Transverse colon (tissue), 4 donors: ENCODE measurements at regions of chr15 and their contacts with region 1.

Region 1: GRCh38 chr15:91271565-91272153 is 171.6 kb downstream of the SV2B start:
- DNase-seq: peak; percentile 57
- H3K4me3 ChIP-seq: no peak overlapping the region
- H3K27ac ChIP-seq: no peak overlapping the region
- H3K4me1 ChIP-seq: peaks cover 0 to 7% (median 0%) of the 10 kb centered on the region in 4 donors
- H3K27me3 ChIP-seq: peaks cover 14% of the 10 kb centered on the region
- CTCF ChIP-seq: peak; percentile 68 to 78 (median 73)
- EP300 ChIP-seq: no peak
- POLR2A ChIP-seq: no peak

Region 2: GRCh38 chr15:90954712-90955671 is 316.7 kb before region 1 on chr15 and contains the start of gene RCCD1:
- in situ Hi-C with region 1: loop called in 3 of 4 experiments (anchors 10 to 25 kb)
- intact Hi-C with region 1: loop called (anchors 10 kb)
- DNase-seq: peak; percentile 96
- H3K4me3 ChIP-seq: peak within 1 kb of the TSS; percentile 49 to 73 (median 62)
- H3K27ac ChIP-seq: peak within 1 kb of the TSS; percentile 93 to 98 (median 94)
- H3K4me1 ChIP-seq: peaks cover 11 to 32% (median 20%) of the 10 kb centered on the region in 4 donors
- H3K27me3 ChIP-seq: no peaks in the 10 kb centered on the region
- CTCF ChIP-seq: no peak
- EP300 ChIP-seq: no peak
- POLR2A ChIP-seq: peak; percentile 75
- total RNA-seq, gene RCCD1: 13.1 to 438 (median 16.2) TPM

Region 3: DNA sequence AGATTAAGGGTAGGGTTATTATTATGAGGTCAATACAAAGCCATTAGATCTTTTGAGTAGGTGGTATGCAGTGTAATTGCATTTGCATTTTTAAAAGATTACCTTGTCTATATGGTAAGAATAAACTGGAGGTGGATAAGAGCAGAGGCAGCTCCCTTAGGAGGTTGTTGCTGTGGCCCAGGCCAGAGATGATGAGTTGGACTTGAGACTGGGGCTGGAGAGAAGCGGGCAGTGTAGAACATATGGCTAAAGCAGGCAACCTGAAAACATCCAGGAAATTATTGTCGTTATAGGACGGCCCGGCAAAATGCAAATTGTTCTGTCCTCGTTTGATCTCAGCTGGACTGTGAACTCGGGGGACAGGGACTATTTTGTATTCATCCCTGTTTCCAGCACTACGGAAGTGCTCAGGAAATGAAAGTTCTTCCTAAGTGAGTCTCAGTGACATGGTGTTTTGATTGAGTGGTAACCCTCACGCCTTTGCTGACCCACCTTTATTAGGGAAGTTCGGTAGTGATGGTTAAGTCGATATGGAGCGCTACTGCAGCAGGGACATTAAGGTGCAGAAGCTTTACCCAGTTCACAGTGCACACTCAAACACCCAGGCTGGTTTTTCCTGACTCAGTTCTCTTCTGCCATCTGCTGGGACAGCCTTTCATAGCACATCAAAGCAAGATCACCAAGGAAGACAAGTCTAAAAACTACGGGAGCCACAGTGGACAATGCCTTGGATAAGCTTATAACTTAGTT is 222.1 kb before region 1 on chr15:
- in situ Hi-C with region 1: loop called in 1 of 4 experiments (anchors 10 kb)
- intact Hi-C with region 1: no loop called
- DNase-seq: peak; percentile 70
- H3K4me3 ChIP-seq: no peak overlapping the region
- H3K27ac ChIP-seq: no peak overlapping the region
- H3K4me1 ChIP-seq: peaks cover 0 to 3% (median 0%) of the 10 kb centered on the region in 4 donors
- H3K27me3 ChIP-seq: peaks cover 24% of the 10 kb centered on the region
- CTCF ChIP-seq: peak; percentile 47 to 58 (median 53)
- EP300 ChIP-seq: no peak
- POLR2A ChIP-seq: no peak

Region 4: DNA sequence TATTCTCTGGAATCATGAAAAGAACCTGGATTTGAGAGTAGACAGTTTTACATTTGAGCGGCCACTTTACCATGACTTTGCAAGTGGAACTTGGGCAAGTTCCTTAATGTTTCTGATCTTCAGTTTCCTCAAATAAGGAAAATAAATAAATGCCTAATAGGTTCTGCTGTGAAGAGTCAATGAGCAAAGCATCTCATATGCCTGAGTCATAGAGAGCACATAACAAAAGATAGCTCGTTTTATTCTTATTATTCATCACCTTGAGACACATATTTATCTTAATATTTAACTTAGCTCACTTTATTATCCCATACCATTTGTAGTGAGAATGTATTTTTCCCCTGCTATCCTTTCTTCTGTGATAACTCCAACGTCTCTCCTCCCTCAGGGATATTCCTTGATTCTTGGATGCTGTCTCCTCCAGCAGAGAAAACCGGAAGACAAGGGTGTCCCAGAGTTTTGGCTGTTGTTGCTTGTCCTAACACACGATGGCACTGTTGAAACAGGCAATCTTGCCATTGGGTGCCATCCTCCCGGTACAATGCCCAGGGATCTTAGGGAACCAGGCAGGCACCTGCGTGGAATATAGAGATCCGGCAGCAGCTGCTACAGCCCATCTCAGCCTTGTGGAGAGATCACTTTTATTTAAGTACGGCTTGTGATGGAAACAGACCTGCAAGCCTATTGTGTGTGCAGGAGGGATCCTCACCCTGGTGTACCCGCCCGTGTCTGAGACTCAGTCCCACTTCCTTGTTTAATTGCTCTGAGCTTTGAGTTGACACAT is 215.9 kb before region 1 on chr15:
- in situ Hi-C with region 1: loop called in 3 of 4 experiments (anchors 5 to 10 kb)
- intact Hi-C with region 1: loop called (anchors 5 kb)
- DNase-seq: peak; percentile 57
- H3K4me3 ChIP-seq: no peak overlapping the region
- H3K27ac ChIP-seq: no peak overlapping the region
- H3K4me1 ChIP-seq: no peaks in the 10 kb centered on the region
- H3K27me3 ChIP-seq: peaks cover 76% of the 10 kb centered on the region
- CTCF ChIP-seq: peak; percentile 58 to 69 (median 63)
- EP300 ChIP-seq: no peak
- POLR2A ChIP-seq: no peak